ENCODE measurements at regions of chr5 and their contacts with region 1.

Region 1: GRCh38 chr5:140351609-140352334 is 5.4 kb upstream of the HBEGF start:
- DNase-seq: peak; percentile 66
- H3K4me3 ChIP-seq: peak overlapping the region in 1 of 2 experiments; percentile 11; a peak in 1 of 4 replicates
- H3K27ac ChIP-seq: no peak overlapping the region
- H3K4me1 ChIP-seq: peaks cover 0 to 6% of the 10 kb centered on the region in 2 experiments; a peak in 2 of 4 replicates
- H3K27me3 ChIP-seq: no peaks in the 10 kb centered on the region
- CTCF ChIP-seq: peak; percentile 88
- EP300 ChIP-seq: no peak
- RAD21 ChIP-seq: peak; percentile 74

Region 2: GRCh38 chr5:140251527-140251973 is 100.2 kb before region 1 on chr5:
- CTCF ChIA-PET with region 1: interaction called, 418 read pairs
- POLR2A ChIA-PET with region 1: interaction called, 8 read pairs
- DNase-seq: no peak
- H3K4me3 ChIP-seq: no peak overlapping the region
- H3K27ac ChIP-seq: peak overlapping the region in 1 of 2 experiments; percentile 96; a peak in 2 of 4 replicates
- H3K4me1 ChIP-seq: peaks cover 6 to 18% of the 10 kb centered on the region in 2 experiments
- H3K27me3 ChIP-seq: no peaks in the 10 kb centered on the region
- CTCF ChIP-seq: no peak
- EP300 ChIP-seq: 0 out of 4 replicates have a peak, but pooled peaks of 1 of the 2 experiments have one; percentile 73
- RAD21 ChIP-seq: no peak

Region 3: DNA sequence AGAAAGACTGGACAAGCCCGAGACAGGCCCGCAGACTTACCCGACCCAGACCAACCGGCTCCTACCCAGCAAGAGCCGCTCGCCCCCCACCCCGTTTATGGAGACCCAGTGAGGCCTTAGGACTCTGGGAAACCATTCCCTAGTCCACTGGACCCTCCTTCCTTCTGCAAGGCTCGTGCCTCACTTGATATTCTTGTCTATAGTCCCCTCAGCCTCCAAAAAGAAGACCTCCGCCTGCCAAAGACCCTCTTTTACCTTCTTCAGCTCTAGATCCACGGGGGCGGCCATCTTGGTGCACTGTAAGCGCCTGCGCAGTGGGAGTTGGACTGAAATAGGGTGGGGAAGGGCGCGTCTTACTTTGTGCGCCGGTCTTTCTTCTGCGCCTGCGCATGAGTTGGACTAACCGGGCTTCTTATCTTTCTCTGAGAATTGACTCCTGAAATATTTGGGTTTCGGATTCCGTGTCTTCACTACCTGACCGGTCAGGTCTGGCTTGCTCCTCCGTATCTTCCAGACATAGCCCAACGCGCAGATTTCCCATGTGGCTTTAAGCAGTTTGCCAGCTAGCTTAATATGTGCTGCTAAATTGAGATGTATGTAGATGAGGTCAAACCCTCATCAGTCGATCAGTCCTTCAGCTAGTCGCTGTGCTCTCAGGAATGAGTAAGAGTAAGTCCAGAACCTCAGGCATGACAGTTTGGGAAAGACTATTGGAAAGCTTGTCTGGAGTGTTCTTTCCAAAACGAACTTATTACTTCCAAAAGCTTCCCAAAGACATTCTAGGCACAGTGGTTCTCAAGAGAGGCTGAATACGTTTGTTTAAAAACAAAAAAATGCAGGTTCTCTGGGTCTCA is 48.8 kb before region 1 on chr5 and contains the start of gene PFDN1:
- CTCF ChIA-PET with region 1: interaction called, 12 read pairs
- POLR2A ChIA-PET with region 1: no interaction called
- DNase-seq: peak; percentile 92
- H3K4me3 ChIP-seq: peak within 1 kb of the TSS; percentile 78 to 86
- H3K27ac ChIP-seq: peak within 1 kb of the TSS; percentile 77 to 86
- H3K4me1 ChIP-seq: peaks cover 5 to 19% of the 10 kb centered on the region in 2 experiments; a peak in 3 of 4 replicates
- H3K27me3 ChIP-seq: no peaks in the 10 kb centered on the region
- CTCF ChIP-seq: no peak
- EP300 ChIP-seq: no peak
- RAD21 ChIP-seq: no peak
- polyA plus RNA-seq, gene PFDN1: 55.2 and 63.6 TPM in 2 replicates

Region 4: DNA sequence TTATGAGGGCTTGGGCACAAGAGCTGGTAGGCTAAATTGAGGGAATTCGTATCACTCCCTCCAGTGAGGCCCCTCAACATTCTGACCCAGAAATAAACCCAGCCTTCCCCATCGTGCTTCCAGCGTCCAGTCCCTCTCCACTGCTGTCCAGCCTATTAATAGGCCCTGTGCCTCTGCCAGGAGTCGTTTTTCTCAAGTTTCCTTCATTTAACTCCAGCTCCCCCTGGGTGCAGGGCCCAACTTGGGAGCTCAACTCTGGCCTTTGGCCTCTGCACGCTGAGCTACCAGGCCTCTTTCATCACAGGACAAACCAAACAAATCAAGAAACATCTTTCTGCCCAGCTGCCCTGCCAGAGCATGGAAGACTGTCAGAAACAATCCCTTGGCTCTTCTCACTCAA is 15.4 kb before region 1 on chr5:
- CTCF ChIA-PET with region 1: interaction called, 22 read pairs
- POLR2A ChIA-PET with region 1: no interaction called
- DNase-seq: no peak
- H3K4me3 ChIP-seq: no peak overlapping the region
- H3K27ac ChIP-seq: no peak overlapping the region
- H3K4me1 ChIP-seq: 0 out of 4 replicates have a peak, but pooled peaks cover 0 to 2% of the 10 kb centered on the region in 2 experiments
- H3K27me3 ChIP-seq: no peaks in the 10 kb centered on the region
- CTCF ChIP-seq: no peak
- EP300 ChIP-seq: no peak
- RAD21 ChIP-seq: no peak

Region 5: GRCh38 chr5:140372971-140373487 is 21.3 kb after region 1 on chr5:
- CTCF ChIA-PET with region 1: interaction called, 21 read pairs
- POLR2A ChIA-PET with region 1: no interaction called
- DNase-seq: peak; percentile 79
- H3K4me3 ChIP-seq: no peak overlapping the region; a peak in 1 of 4 replicates
- H3K27ac ChIP-seq: no peak overlapping the region
- H3K4me1 ChIP-seq: no peaks in the 10 kb centered on the region; a peak in 1 of 4 replicates
- H3K27me3 ChIP-seq: no peaks in the 10 kb centered on the region
- CTCF ChIP-seq: peak; percentile 78
- EP300 ChIP-seq: no peak
- RAD21 ChIP-seq: peak; percentile 83

Measured in SK-N-SH (cell line).